ENCODE measurements at regions of chr9 and their contacts with region 1.

Region 1: DNA sequence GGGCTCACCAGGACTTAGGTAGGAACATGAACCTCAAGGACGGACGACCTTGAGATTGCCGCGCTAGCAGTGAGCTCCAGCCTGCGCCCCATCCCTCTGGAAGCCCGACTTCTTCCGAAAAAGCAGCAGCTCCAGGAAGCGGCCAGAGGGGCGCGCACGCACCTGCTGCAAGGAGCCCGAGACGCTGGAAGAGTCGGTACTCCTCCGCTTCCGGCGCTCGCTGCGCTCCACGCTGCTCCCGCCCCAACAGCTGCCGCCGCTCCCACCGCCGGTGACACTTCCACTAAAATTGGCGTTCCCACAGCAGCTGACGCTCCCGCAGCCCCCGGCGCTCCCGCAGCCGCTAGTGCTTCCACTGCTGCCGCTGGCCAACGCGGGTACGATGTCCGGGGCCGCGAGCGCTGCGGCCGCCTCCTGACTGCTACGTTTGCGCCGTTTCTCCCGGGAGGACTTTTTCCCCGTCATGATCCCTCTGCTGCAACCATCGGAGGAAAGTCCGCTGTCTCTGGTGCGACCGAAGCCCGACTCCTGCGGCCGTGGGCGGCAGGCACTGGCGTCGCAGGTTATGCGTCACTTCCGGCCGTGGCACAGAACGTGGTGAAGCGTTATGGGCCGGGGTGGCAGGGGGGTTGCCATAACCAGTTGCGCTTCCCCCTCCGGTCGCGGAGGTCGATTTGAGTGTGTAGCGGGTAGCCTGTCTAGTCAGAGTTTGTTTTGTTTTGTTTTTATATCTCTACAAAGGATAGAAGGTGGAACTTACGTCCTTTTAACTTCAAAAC is at the start of gene CAAP1:
- DNase-seq: peak; percentile 87 to 90
- ATAC-seq: peak; percentile 97
- H3K4me3 ChIP-seq: peak within 1 kb of the TSS; percentile 83 to 100 (median 92)
- H3K27ac ChIP-seq: peak within 1 kb of the TSS; percentile 92 to 96 (median 96)
- H3K4me1 ChIP-seq: peaks cover 23 to 32% of the 10 kb centered on the region in 2 donors
- H3K27me3 ChIP-seq: no peaks in the 10 kb centered on the region
- CTCF ChIP-seq: peak in 4 of 5 experiments; percentile 24 to 42 (median 28)
- POLR2A ChIP-seq: peak; percentile 65 to 68
- total RNA-seq, gene CAAP1: 4.5 to 12.3 (median 6.8) TPM

Region 2: DNA sequence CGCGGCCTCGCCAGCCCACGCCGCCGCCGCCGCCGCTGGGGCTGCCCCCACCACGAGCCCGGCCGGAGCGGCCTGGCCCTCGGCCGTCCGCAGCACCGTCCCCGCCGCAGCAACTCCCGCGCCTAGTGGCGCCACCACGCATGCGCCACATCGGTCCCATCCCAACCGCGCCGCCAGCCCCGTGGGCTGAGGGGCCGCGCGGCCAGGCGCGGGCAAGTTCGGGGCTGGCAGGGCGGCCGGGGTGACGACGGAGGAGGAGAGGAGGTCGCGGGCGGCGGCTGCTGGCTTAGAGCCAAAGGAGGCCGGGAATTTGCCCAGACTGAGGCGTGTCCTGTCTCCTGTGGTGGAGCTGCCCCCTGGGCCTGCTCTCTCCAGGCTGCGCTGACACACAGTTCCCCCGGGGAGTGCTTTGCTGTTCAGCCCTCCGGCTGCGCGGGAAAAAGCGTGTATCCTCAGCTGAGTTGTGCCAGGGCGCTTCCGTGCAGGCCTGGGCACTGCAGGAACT is 1214.2 kb before region 1 on chr9 and contains the start of gene TUSC1:
- in situ Hi-C with region 1: no loop called
- intact Hi-C with region 1: loop called (anchors 10 kb)
- DNase-seq: peak; percentile 51 to 57
- ATAC-seq: peak; percentile 86 to 90
- H3K4me3 ChIP-seq: peak within 1 kb of the TSS; percentile 83 to 99 (median 92)
- H3K27ac ChIP-seq: peak within 1 kb of the TSS; percentile 94 to 97 (median 95)
- H3K4me1 ChIP-seq: peaks cover 8 to 12% of the 10 kb centered on the region in 2 donors
- H3K27me3 ChIP-seq: no peaks in the 10 kb centered on the region
- CTCF ChIP-seq: peak in 4 of 5 experiments; percentile 13 to 38 (median 30)
- POLR2A ChIP-seq: peak; percentile 0 to 66
- total RNA-seq, gene TUSC1: 7.0 to 21.1 (median 13.5) TPM

Region 3: GRCh38 chr9:26936300-26936948 is 44.0 kb after region 1 on chr9:
- in situ Hi-C with region 1: loop called in 2 of 4 experiments (anchors 10 kb)
- intact Hi-C with region 1: no loop called
- DNase-seq: no peak
- ATAC-seq: no peak
- H3K4me3 ChIP-seq: no peak overlapping the region
- H3K27ac ChIP-seq: no peak overlapping the region
- H3K4me1 ChIP-seq: peaks cover 17 to 36% of the 10 kb centered on the region in 2 donors
- H3K27me3 ChIP-seq: no peaks in the 10 kb centered on the region
- CTCF ChIP-seq: no peak
- POLR2A ChIP-seq: no peak

Region 4: DNA sequence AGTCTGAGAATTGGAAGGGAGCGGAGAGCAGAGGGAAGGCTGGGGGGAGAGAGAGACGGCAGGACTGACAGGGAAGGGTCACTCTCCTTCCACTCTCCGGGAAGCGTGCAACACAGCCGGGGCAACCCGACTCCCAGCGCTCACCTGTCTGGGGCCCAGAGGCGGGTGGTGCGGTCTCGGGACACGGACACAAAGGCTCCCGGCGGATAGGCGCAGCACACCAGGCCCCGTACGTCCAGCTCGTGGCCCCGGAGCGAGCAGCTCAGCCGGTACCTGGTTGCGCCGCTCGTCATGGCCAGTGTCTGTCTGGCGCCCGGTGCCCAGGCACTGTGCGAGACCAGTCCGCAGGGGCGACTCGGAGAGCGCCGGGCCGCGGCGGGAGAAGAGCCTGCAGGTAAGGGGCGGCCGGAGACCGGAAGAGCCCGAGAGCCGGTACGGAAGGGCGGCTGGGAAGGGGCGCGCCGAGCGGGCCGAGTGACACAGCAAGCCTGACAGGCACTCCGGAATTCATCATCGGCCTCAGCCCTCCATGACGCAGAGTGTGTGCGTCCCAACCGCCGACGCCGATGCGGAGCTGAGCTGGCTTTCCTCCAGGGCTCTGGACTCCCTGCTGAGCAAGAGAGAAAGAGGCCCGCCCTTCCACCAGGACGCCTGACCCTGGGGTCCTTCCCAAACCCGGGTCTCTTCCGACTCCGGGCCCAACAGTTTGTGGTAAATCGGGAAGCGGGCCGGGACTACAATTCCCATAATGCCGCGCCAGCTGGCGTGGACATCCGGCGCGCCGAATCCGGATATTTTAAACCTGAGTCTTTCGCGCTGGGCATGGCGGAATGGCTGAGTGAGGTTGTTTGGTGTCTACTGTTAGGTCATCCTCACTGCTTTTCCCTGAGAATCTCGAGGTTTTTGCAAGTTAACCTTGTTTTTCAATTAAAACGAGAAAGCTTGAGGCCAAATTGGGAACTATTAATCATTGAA is 54.6 kb after region 1 on chr9 and contains the start of gene PLAA:
- in situ Hi-C with region 1: loop called in 1 of 4 experiments (anchors 10 kb)
- intact Hi-C with region 1: loop called (anchors 1 kb)
- DNase-seq: peak; percentile 82 to 86
- ATAC-seq: peak; percentile 98 to 99
- H3K4me3 ChIP-seq: peak within 1 kb of the TSS; percentile 83 to 98 (median 95)
- H3K27ac ChIP-seq: peak within 1 kb of the TSS; percentile 86 to 99 (median 98)
- H3K4me1 ChIP-seq: peaks cover 36 to 38% of the 10 kb centered on the region in 2 donors
- H3K27me3 ChIP-seq: no peaks in the 10 kb centered on the region
- CTCF ChIP-seq: peak in 3 of 5 experiments; percentile 2 to 46 (median 41)
- POLR2A ChIP-seq: peak; percentile 65 to 79
- total RNA-seq, gene PLAA: 72.5 to 105 (median 83.8) TPM

Region 5: GRCh38 chr9:26975693-26976059 is 83.2 kb after region 1 on chr9:
- in situ Hi-C with region 1: no loop called
- intact Hi-C with region 1: loop called (anchors 5 kb)
- DNase-seq: no peak
- ATAC-seq: no peak
- H3K4me3 ChIP-seq: no peak overlapping the region
- H3K27ac ChIP-seq: no peak overlapping the region
- H3K4me1 ChIP-seq: no peaks in the 10 kb centered on the region
- H3K27me3 ChIP-seq: no peaks in the 10 kb centered on the region
- CTCF ChIP-seq: peak in 4 of 5 experiments; percentile 27 to 62 (median 51)
- POLR2A ChIP-seq: no peak